Activated CD4-positive, alpha-beta memory T cell treated with anti-CD3 and anti-CD28 coated beads for 36 hours (primary cell): ENCODE measurements at regions of chr4 and their contacts with region 1.

Region 1: DNA sequence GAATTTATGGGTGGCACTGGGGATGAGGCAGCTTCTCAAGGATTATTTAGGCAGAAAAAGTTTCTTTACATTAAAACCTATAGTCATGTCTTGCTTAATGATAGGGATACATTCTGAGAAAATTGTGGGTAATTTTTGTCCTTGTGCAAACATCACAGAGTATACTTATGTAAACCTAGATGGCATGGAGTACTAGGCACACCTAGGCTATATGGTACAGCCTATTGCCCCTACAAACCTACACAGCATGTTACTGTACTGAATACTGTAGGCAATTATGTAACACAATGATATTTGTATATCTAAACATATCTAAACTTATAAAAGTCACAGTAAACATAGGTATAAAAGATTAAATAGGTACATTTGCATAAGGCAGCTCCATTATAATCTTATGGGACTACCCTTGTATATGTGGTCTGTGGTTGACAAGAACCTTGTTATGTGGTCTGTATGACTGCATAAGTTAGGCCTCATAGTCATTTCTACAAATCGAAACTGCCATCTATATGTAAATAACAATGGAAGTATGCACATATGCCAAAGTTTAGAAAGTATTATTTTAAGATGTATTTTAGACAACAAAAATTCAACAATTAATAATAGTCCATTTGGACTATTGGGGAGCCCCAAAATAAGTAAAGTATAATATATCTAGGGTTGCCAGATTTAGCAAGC is 87.3 kb downstream of the CFAP299 start:
- DNase-seq: no peak
- H3K4me3 Mint-ChIP-seq: no peak overlapping the region
- H3K27ac Mint-ChIP-seq: no peak overlapping the region
- H3K4me1 Mint-ChIP-seq: no peaks in the 10 kb centered on the region
- H3K27me3 Mint-ChIP-seq: no peaks in the 10 kb centered on the region

Region 2: GRCh38 chr4:80393246-80393969 is 29.5 kb before region 1 on chr4:
- CTCF ChIA-PET with region 1: no interaction called
- POLR2A ChIA-PET with region 1: no interaction called
- intact Hi-C with region 1: loop called (anchors 1 kb)
- DNase-seq: peak; percentile 29
- H3K4me3 Mint-ChIP-seq: no peak overlapping the region
- H3K27ac Mint-ChIP-seq: no peak overlapping the region
- H3K4me1 Mint-ChIP-seq: peaks cover 8% of the 10 kb centered on the region
- H3K27me3 Mint-ChIP-seq: no peaks in the 10 kb centered on the region